ENCODE measurements at regions of chr12 and their contacts with region 1.

Region 1: GRCh38 chr12:107760809-107761501 is at the start of gene PRDM4:
- DNase-seq: peak; percentile 95
- H3K4me3 ChIP-seq: peak within 1 kb of the TSS; percentile 75 to 97 (median 88)
- H3K27ac ChIP-seq: peak within 1 kb of the TSS; percentile 83 to 91 (median 87)
- H3K4me1 ChIP-seq: peaks cover 10 to 32% (median 24%) of the 10 kb centered on the region in 4 donors
- H3K27me3 ChIP-seq: no peaks in the 10 kb centered on the region
- CTCF ChIP-seq: peak in 1 of 5 experiments; percentile 37
- EP300 ChIP-seq: no peak
- POLR2A ChIP-seq: peak; percentile 90
- total RNA-seq, gene PRDM4: 41.6 to 71.2 (median 42.4) TPM

Region 2: GRCh38 chr12:107564946-107565345 is 196.0 kb before region 1 on chr12:
- in situ Hi-C with region 1: no loop called
- intact Hi-C with region 1: no loop called
- DNase-seq: no peak
- H3K4me3 ChIP-seq: no peak overlapping the region
- H3K27ac ChIP-seq: no peak overlapping the region
- H3K4me1 ChIP-seq: no peaks in the 10 kb centered on the region
- H3K27me3 ChIP-seq: no peaks in the 10 kb centered on the region
- CTCF ChIP-seq: peak in 1 of 5 experiments; percentile 13
- EP300 ChIP-seq: no peak
- POLR2A ChIP-seq: no peak

Region 3: DNA sequence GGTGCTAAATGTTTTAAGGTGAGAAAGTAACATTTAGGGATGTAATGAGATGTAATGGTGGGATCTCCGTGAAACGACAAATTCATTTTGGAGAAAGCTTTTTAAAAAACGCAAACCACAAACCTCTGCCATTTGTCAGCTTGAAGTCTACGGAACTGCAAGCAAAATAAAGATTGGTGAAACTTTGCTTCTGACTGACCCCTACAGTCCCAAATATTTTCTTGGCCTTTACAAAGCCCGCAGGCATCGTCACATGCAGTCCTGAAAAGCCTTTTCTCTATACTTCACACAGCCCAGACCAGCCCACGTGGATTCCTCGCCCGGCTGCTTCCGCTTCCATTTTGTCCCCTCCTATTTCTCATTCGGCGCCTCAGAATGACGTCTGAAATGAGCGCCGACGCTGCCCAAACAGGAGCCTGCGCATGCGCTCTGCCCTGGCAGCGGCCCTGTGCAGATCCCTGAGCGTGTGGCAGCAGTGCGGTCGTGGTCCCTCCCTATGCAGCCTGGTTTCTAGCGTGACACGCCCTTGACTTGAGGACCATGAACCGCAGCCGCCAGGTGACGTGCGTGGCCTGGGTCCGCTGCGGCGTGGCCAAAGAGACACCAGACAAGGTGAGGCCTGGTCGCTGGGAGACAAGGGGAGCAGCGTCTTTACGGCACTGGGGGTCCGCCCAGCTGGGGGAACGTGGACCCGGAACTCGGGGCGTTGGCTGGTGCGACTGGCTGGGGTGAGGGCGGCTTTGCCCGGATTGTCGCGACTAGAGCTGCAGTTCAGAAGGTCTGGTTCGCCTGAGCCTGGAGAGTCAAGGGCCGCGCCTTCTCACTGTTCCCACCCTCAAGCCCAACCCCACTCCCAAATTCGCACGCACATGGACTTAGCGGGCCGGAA is 75.4 kb before region 1 on chr12 and contains the start of gene PWP1:
- in situ Hi-C with region 1: loop called in 2 of 4 experiments (anchors 5 to 10 kb)
- intact Hi-C with region 1: no loop called
- DNase-seq: peak; percentile 96
- H3K4me3 ChIP-seq: peak within 1 kb of the TSS; percentile 70 to 92 (median 82)
- H3K27ac ChIP-seq: peak within 1 kb of the TSS; percentile 84 to 91 (median 87)
- H3K4me1 ChIP-seq: peaks cover 4 to 22% (median 18%) of the 10 kb centered on the region in 4 donors
- H3K27me3 ChIP-seq: no peaks in the 10 kb centered on the region
- CTCF ChIP-seq: peak in 1 of 5 experiments; percentile 13
- EP300 ChIP-seq: no peak
- POLR2A ChIP-seq: peak; percentile 88
- total RNA-seq, gene PWP1: 29.9 to 49.7 (median 41.4) TPM

Measured in transverse colon (tissue), 4 donors.